ENCODE measurements at regions of chr19 and their contacts with region 1.

Region 1: DNA sequence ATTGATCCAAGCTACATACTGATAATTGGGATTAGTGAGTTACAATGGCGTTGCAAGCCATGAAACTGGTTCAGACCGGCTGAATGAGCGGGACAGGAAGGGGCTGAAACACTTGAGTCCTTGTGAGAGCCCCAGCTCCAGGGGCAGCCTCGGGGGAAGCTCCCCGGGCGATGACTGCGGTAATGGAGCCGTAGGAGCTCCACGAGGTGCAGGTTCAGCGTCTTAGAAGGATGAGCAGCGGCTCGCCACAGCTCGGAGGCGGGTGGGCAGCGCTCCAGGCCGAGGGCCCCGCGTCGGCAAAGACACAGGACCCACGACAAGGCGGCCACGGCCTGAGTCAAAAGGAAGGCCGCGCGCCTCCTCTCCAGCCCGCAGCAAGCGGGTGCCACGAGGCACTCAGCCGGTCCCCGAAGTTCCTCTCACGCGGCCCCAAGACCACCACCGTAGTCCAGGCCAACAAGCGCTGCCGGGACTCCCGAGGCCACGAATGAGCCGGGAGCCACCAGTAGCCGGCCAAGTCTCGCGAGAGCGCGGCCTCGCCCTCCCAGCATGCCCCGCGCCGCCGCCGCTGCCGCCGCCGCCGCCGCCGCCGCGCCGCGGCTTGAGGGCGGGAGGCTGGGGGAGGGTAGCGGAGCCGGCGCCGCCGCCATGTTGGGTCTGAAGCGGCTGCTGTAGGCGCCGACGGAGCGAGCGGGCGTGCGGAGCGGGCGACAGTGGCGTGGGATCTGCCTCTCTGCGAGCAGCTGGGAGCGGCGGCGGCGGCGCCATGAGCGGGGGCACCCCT is at the start of gene LSM14A:
- DNase-seq: peak; percentile 67 to 91
- H3K4me3 ChIP-seq: peak within 1 kb of the TSS; percentile 71
- H3K27ac ChIP-seq: peak within 1 kb of the TSS; percentile 90
- H3K4me1 ChIP-seq: peaks cover 45% of the 10 kb centered on the region
- H3K27me3 ChIP-seq: no peaks in the 10 kb centered on the region
- CTCF ChIP-seq: no peak
- total RNA-seq, gene LSM14A: 114 and 169 TPM in 2 replicates

Region 2: GRCh38 chr19:34134190-34135053 is 37.6 kb before region 1 on chr19:
- CTCF ChIA-PET with region 1: no interaction called
- POLR2A ChIA-PET with region 1: no interaction called
- intact Hi-C with region 1: loop called (anchors 1 kb)
- DNase-seq: peak; percentile 52 to 92
- H3K4me3 ChIP-seq: peak overlapping the region; percentile 100
- H3K27ac ChIP-seq: peak overlapping the region; percentile 81
- H3K4me1 ChIP-seq: peaks cover 6% of the 10 kb centered on the region; the same call in 1 of the 2 replicates
- H3K27me3 ChIP-seq: peaks cover 22% of the 10 kb centered on the region; the same call in 1 of the 2 replicates
- CTCF ChIP-seq: no peak

Region 3: GRCh38 chr19:34461375-34462100 is 289.5 kb after region 1 on chr19:
- CTCF ChIA-PET with region 1: no interaction called
- POLR2A ChIA-PET with region 1: no interaction called
- intact Hi-C with region 1: no loop called
- DNase-seq: no peak
- H3K4me3 ChIP-seq: no peak overlapping the region
- H3K27ac ChIP-seq: no peak overlapping the region
- H3K4me1 ChIP-seq: peaks cover 22% of the 10 kb centered on the region
- H3K27me3 ChIP-seq: no peaks in the 10 kb centered on the region
- CTCF ChIP-seq: no peak

Measured in PC-9 (cell line).